ENCODE measurements at regions of chr2 and their contacts with region 1.

Region 1: DNA sequence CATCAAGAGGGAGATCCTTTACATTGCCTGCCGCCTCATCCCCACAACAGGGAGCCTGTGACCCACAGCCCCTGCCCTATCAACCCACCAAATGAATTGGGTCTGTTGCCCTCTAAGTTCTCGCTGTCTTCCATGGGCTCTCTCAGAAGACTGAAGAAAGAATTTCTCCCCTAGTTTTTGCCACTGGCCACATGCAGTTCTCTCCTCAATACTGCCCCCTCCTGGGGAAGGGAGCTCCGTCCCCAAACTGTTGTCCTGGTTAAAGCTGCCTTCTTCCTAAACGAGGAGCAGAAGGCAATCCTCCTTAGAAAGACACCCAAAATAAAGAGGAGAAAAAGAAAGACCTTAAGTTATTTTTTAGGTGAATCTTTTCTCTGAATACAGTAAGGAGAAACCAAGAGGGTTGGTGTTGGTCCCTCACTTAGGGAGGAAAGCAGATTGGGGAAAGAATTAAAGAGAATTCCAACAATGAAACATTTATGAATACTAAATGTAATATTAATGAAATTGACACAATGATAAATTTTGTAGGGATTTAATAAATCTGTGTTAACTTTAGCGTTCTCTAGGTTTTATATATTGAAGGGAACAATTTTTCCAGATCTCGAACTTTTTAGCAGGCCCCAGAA is 31.1 kb upstream of the SATB2 start:
- DNase-seq: peak; percentile 83
- H3K4me3 ChIP-seq: no peak overlapping the region
- H3K27ac ChIP-seq: no peak overlapping the region
- H3K4me1 ChIP-seq: no peaks in the 10 kb centered on the region
- H3K27me3 ChIP-seq: no peaks in the 10 kb centered on the region
- CTCF ChIP-seq: peak; percentile 86

Region 2: DNA sequence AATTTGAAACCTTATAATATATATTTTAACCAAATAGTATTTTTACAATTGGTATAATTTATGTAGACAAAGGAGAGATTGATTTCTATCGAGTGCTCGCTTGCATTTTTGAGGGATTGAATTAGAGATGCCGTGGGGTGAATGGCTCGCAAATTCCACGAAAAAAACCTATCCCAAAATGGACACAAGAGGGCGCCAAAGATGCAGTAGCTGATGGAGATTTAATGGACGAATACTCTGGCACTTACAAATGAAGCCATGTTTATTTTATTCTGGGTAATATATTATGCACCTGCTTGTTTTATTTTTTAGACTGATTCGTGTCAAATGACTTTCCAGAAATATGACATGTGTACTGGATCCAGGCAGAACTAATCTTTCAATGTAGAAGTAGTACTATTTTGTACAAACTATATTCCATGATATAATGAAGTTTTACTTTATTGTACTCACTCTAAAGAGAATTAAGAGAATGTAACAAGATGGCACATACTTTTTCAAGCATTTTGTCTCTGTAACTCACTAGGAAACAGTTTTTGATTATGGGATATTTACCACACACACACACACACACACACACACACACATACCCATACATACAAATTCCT is 1179.1 kb before region 1 on chr2:
- CTCF ChIA-PET with region 1: interaction called, 8 read pairs
- POLR2A ChIA-PET with region 1: no interaction called
- intact Hi-C with region 1: loop called (anchors 2 kb)
- DNase-seq: peak; percentile 72
- H3K4me3 ChIP-seq: no peak overlapping the region
- H3K27ac ChIP-seq: no peak overlapping the region
- H3K4me1 ChIP-seq: peaks cover 4% of the 10 kb centered on the region
- H3K27me3 ChIP-seq: peaks cover 5% of the 10 kb centered on the region
- CTCF ChIP-seq: peak; percentile 88

Region 3: DNA sequence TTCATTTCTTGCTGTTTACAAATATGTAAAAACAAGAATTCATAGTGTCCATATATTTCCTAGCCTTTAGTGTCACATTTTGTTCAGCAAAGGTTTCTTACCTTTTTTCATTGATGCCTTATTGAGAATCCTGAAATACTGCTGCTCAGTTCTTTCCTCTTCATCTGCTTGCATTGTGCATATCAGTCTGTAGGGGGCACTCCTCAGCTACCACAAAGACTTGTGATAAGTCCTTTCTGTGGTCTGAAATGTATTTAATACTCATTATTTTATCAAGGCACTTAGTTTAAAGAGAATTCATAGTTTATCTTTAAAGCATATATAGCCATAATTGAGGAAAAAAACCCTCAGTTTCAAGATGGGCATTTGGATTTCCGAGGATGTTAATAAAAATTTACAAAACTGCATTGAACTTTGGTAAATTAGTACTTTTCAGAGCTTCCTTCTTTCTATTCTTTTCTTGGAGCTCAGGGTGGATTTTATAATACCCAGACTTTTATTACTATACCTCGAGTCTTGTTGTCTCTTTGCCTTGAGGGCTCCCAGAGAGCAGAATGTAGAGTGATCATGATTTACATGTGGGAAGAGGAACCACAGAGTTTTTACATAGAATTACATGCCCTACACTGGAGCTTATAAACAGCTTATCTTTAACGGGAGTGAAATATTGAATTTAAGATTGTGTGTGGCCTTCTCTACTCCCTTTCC is 1114.4 kb before region 1 on chr2:
- CTCF ChIA-PET with region 1: interaction called, 5 read pairs
- POLR2A ChIA-PET with region 1: no interaction called
- intact Hi-C with region 1: loop called (anchors 2 kb)
- DNase-seq: peak; percentile 67
- H3K4me3 ChIP-seq: no peak overlapping the region
- H3K27ac ChIP-seq: no peak overlapping the region
- H3K4me1 ChIP-seq: no peaks in the 10 kb centered on the region
- H3K27me3 ChIP-seq: no peaks in the 10 kb centered on the region
- CTCF ChIP-seq: peak; percentile 87

Region 4: GRCh38 chr2:198657512-198658121 is 831.3 kb before region 1 on chr2:
- CTCF ChIA-PET with region 1: no interaction called
- POLR2A ChIA-PET with region 1: no interaction called
- intact Hi-C with region 1: loop called (anchors 2 kb)
- DNase-seq: peak; percentile 52
- H3K4me3 ChIP-seq: no peak overlapping the region
- H3K27ac ChIP-seq: no peak overlapping the region
- H3K4me1 ChIP-seq: no peaks in the 10 kb centered on the region
- H3K27me3 ChIP-seq: peaks cover 12% of the 10 kb centered on the region
- CTCF ChIP-seq: peak; percentile 69

Region 5: DNA sequence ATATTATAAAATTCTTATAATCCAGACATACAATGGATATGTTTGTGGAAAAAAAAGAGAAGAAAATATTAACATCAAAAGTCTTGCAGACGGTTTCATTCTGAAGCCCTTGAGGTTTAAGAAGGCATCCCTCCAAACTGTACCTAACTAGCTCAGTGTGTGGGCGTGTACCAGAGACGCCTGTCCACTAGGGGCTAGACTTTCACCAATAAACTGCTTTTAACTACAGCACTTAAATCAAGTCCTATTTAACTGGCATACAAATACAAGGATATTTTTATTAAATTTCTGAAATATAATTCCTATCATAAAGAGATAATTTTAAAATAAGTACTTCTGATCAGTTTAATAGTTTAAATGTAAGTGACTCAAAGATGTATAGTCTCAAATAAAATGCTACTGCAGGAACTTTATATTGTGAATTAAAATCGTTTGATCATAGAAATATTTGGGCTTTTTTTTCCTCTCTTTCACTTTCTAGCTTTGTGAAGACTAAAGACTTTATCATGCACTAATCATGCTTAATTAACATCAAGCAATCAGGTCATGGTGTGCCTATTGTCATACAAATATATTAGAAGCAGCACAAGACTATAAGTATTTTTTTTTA is 468.9 kb before region 1 on chr2:
- CTCF ChIA-PET with region 1: interaction called, 3 read pairs
- POLR2A ChIA-PET with region 1: no interaction called
- intact Hi-C with region 1: loop called (anchors 10 kb)
- DNase-seq: peak; percentile 51
- H3K4me3 ChIP-seq: no peak overlapping the region
- H3K27ac ChIP-seq: no peak overlapping the region
- H3K4me1 ChIP-seq: no peaks in the 10 kb centered on the region
- H3K27me3 ChIP-seq: no peaks in the 10 kb centered on the region
- CTCF ChIP-seq: peak; percentile 59

Region 6: DNA sequence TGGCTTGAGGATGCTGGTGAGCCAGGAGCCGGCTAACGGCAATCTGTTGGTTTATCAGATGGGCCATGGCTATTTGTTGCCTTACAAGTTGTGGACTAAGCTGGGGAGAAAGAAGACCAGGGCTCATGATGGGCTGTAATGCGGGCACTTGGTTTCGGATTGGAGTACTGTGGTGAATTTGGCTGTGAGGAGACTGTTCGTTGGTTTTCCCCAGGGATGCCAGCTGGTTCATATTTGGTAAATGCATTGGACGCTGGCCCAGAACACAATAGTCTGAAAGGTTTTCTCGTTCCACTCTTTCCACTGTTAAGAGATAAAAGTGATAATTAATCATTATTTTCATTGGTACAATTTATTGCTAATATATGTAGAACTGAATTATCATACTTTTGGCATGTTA is 140.0 kb before region 1 on chr2:
- CTCF ChIA-PET with region 1: no interaction called
- POLR2A ChIA-PET with region 1: no interaction called
- intact Hi-C with region 1: no loop called
- DNase-seq: no peak
- H3K4me3 ChIP-seq: no peak overlapping the region
- H3K27ac ChIP-seq: no peak overlapping the region
- H3K4me1 ChIP-seq: no peaks in the 10 kb centered on the region
- H3K27me3 ChIP-seq: no peaks in the 10 kb centered on the region
- CTCF ChIP-seq: no peak

Region 7: GRCh38 chr2:199552141-199552540 is 63.3 kb after region 1 on chr2:
- CTCF ChIA-PET with region 1: no interaction called
- POLR2A ChIA-PET with region 1: interaction called, 18 read pairs
- intact Hi-C with region 1: no loop called
- DNase-seq: no peak
- H3K4me3 ChIP-seq: no peak overlapping the region
- H3K27ac ChIP-seq: no peak overlapping the region
- H3K4me1 ChIP-seq: no peaks in the 10 kb centered on the region
- H3K27me3 ChIP-seq: no peaks in the 10 kb centered on the region
- CTCF ChIP-seq: no peak

Region 8: GRCh38 chr2:199596549-199596948 is 107.7 kb after region 1 on chr2:
- CTCF ChIA-PET with region 1: no interaction called
- POLR2A ChIA-PET with region 1: no interaction called
- intact Hi-C with region 1: no loop called
- DNase-seq: peak; percentile 49
- H3K4me3 ChIP-seq: no peak overlapping the region
- H3K27ac ChIP-seq: no peak overlapping the region
- H3K4me1 ChIP-seq: peaks cover 7% of the 10 kb centered on the region
- H3K27me3 ChIP-seq: no peaks in the 10 kb centered on the region
- CTCF ChIP-seq: peak; percentile 63

Region 9: DNA sequence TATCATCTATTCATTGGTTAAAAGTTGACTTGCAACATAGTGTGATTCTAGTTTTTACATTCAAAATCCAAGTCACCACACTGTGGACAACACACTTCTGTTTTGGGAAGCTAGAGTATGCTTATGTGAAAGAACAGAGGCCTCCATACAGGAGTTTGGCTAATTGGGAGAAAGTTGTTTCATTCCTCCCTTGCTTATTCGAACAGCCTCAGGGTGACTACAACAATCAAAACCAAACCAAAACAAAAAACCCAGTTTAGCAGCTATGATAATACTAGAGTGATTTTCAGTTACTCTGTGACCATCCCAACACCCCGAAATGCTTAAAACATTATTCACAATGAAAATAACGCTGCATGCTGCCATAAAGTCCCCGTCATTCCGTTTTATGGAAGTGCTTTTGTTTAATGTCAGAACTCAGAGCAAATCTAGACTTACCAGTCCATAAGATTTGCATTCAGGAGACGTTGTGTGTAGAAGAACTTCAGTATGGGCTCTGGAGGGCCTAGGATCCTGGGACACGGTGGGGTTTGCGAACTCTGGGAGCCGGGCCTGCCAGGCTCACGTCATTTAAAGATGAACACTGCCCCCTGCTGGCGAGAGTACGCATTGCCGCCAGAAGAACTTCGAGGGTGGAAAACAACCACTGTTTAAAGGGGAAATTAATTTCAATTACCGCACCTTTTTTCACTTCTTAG is 250.7 kb after region 1 on chr2:
- CTCF ChIA-PET with region 1: interaction called, 8 read pairs
- POLR2A ChIA-PET with region 1: no interaction called
- intact Hi-C with region 1: loop called (anchors 5 kb)
- DNase-seq: peak; percentile 88
- H3K4me3 ChIP-seq: no peak overlapping the region
- H3K27ac ChIP-seq: peak overlapping the region; percentile 69
- H3K4me1 ChIP-seq: peaks cover 30% of the 10 kb centered on the region
- H3K27me3 ChIP-seq: no peaks in the 10 kb centered on the region
- CTCF ChIP-seq: peak; percentile 93

Measured in A673 (cell line).